Naive thymus-derived CD4-positive, alpha-beta T cell (primary cell): ENCODE measurements at regions of chr7 and their contacts with region 1.

Region 1: DNA sequence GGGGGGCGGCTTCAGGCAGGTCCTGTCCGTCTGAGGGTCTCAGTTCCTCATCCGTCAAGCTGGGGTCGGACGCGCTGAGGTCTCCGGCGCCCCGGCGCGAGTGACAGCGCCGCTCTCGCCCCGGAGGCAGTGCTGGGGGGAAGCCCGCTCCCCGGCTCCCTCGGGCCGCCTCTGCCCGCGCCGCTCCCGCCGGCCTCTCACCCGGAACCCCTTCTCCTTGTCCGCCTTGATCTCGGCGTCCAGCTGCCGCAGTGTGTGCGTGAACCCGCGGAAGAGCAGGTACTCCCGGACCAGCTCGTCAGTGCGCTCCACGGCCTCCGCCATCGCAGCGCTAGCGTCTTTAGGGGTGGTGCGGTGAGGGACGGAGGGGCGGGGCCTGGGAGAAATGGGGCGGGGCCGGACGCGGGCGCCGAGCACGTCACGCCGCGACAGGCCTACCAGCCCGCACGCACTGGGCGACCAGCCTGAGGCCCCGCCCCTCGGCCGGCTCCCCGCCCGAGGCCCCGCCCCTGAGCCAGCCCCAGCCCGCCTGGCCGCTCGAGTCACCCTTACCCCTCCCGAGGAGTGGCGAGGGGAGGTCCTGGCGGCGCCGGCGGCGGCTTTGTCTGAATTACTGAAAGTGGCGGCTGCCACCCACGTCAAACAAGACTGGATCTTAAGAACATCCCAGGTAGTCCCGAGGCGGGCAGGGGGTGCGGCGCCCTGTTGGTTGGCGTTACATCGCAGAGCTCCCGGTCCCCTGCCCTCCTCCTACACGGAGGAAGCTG is at the start of gene WDR91:
- DNase-seq: peak; percentile 83 to 94 (median 90)
- ATAC-seq: peak; percentile 97
- H3K4me3 ChIP-seq: peak within 1 kb of the TSS; percentile 68
- H3K4me3 Mint-ChIP-seq: peak within 1 kb of the TSS; percentile 91 to 99 (median 96)
- H3K27ac ChIP-seq: peak within 1 kb of the TSS; percentile 92
- H3K27ac Mint-ChIP-seq: peak within 1 kb of the TSS; percentile 94 to 99 (median 98)
- H3K4me1 ChIP-seq: peaks cover 0 to 5% of the 10 kb centered on the region in 2 donors
- H3K4me1 Mint-ChIP-seq: peaks cover 18 to 47% (median 37%) of the 10 kb centered on the region in 7 donors
- H3K27me3 ChIP-seq: no peaks in the 10 kb centered on the region
- H3K27me3 Mint-ChIP-seq: peaks cover 0 to 2% (median 0%) of the 10 kb centered on the region in 5 donors
- total RNA-seq, gene WDR91: 18.2 to 59.2 (median 37.0) TPM

Region 2: GRCh38 chr7:134126966-134127848 is 1084.2 kb before region 1 on chr7 and contains the start of gene LRGUK:
- CTCF ChIA-PET with region 1: no interaction called
- POLR2A ChIA-PET with region 1: no interaction called
- intact Hi-C with region 1: loop called in 1 of 2 experiments (anchors 1 kb)
- DNase-seq: peak; percentile 55 to 82 (median 77)
- ATAC-seq: peak; percentile 100
- H3K4me3 ChIP-seq: peak within 1 kb of the TSS; percentile 93
- H3K4me3 Mint-ChIP-seq: peak within 1 kb of the TSS; percentile 80 to 96 (median 88)
- H3K27ac ChIP-seq: no peak within 1 kb of the TSS
- H3K27ac Mint-ChIP-seq: peak within 1 kb of the TSS in 3 of 9 donors; percentile 16 to 65 (median 46)
- H3K4me1 ChIP-seq: peaks cover 3 to 9% of the 10 kb centered on the region in 2 donors
- H3K4me1 Mint-ChIP-seq: peaks cover 15 to 26% (median 18%) of the 10 kb centered on the region in 7 donors
- H3K27me3 ChIP-seq: no peaks in the 10 kb centered on the region
- H3K27me3 Mint-ChIP-seq: peaks cover 20 to 44% (median 23%) of the 10 kb centered on the region in 5 donors
- total RNA-seq, gene LRGUK: 0.22 to 1.0 (median 0.43) TPM

Region 3: GRCh38 chr7:134865001-134865845 is 346.1 kb before region 1 on chr7:
- CTCF ChIA-PET with region 1: no interaction called
- POLR2A ChIA-PET with region 1: no interaction called
- intact Hi-C with region 1: loop called in 1 of 2 experiments (anchors 1 kb)
- DNase-seq: peak in 8 of 9 donors; percentile 43 to 79 (median 76)
- ATAC-seq: peak; percentile 91
- H3K4me3 ChIP-seq: peak overlapping the region; percentile 51
- H3K4me3 Mint-ChIP-seq: peak overlapping the region; percentile 64 to 90 (median 84)
- H3K27ac ChIP-seq: peak overlapping the region; percentile 68
- H3K27ac Mint-ChIP-seq: peak overlapping the region; percentile 88 to 96 (median 92)
- H3K4me1 ChIP-seq: peaks cover 0 to 13% of the 10 kb centered on the region in 2 donors
- H3K4me1 Mint-ChIP-seq: peaks cover 8 to 76% (median 58%) of the 10 kb centered on the region in 7 donors
- H3K27me3 ChIP-seq: no peaks in the 10 kb centered on the region
- H3K27me3 Mint-ChIP-seq: no peaks in the 10 kb centered on the region

Region 4: GRCh38 chr7:135147899-135148721 is 63.3 kb before region 1 on chr7 and contains the start of gene TMEM140:
- CTCF ChIA-PET with region 1: interaction called, 5 read pairs
- POLR2A ChIA-PET with region 1: interaction called, 19 read pairs
- intact Hi-C with region 1: loop called (anchors 1 kb)
- DNase-seq: peak in 8 of 9 donors; percentile 56 to 88 (median 80)
- ATAC-seq: peak; percentile 84
- H3K4me3 ChIP-seq: peak within 1 kb of the TSS; percentile 71
- H3K4me3 Mint-ChIP-seq: peak within 1 kb of the TSS; percentile 83 to 95 (median 92)
- H3K27ac ChIP-seq: peak within 1 kb of the TSS; percentile 90
- H3K27ac Mint-ChIP-seq: peak within 1 kb of the TSS; percentile 93 to 99 (median 97)
- H3K4me1 ChIP-seq: peaks cover 31 to 38% of the 10 kb centered on the region in 2 donors
- H3K4me1 Mint-ChIP-seq: peaks cover 41 to 74% (median 70%) of the 10 kb centered on the region in 7 donors
- H3K27me3 ChIP-seq: no peaks in the 10 kb centered on the region
- H3K27me3 Mint-ChIP-seq: no peaks in the 10 kb centered on the region
- total RNA-seq, gene TMEM140: 17.8 to 44.7 (median 20.4) TPM

Region 5: DNA sequence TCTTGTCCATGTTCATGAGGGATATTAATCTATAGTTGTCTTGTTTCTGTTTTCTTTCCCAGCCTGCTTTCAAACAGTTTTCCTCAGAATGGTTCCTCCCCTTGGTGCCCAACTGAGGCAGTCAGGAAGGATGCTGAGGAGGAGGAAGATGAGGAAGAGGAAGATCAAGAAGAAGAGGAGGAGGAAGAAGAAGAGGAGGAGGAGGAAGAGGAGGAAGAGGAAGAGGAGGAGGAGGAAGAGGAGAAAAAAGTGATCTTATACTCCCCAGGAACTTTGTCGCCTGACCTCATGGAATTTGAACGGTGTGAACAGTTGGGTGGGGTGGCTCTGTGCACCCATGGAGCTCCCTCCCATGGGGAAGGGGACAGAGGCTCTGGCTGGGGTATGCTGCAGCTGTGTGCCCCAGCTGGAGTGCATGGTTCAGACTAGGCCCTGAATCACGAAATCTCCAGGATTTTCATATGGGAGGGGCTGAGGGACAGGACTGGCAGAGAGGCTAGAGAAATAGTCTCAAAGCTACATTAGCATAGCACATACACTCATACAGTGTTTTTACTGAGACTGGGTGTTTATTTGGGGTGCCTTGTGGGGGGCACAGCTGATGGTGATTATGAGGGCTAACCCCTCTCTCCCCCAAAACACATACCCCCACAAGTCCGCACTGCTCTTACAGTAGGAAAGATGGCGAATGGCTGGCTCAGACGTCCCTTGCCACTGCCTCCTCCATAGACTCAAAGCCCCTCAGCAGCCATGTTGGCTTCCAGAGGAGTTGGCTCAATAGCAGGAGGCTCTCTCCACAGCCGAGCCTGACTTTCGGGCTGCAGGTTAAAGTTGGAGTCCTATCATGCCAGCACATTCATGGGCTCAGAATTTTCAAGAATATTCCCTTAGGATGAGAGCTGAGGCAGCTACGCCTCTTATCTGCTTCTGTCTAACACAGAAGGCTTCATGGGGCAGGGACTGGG is 34.1 kb after region 1 on chr7:
- CTCF ChIA-PET with region 1: no interaction called
- POLR2A ChIA-PET with region 1: no interaction called
- intact Hi-C with region 1: no loop called
- DNase-seq: no peak
- ATAC-seq: no peak
- H3K4me3 ChIP-seq: no peak overlapping the region
- H3K4me3 Mint-ChIP-seq: no peak overlapping the region
- H3K27ac ChIP-seq: no peak overlapping the region
- H3K27ac Mint-ChIP-seq: no peak overlapping the region
- H3K4me1 ChIP-seq: no peaks in the 10 kb centered on the region
- H3K4me1 Mint-ChIP-seq: peaks cover 0 to 6% (median 0%) of the 10 kb centered on the region in 7 donors
- H3K27me3 ChIP-seq: no peaks in the 10 kb centered on the region
- H3K27me3 Mint-ChIP-seq: peaks cover 0 to 14% (median 3%) of the 10 kb centered on the region in 5 donors

Region 6: DNA sequence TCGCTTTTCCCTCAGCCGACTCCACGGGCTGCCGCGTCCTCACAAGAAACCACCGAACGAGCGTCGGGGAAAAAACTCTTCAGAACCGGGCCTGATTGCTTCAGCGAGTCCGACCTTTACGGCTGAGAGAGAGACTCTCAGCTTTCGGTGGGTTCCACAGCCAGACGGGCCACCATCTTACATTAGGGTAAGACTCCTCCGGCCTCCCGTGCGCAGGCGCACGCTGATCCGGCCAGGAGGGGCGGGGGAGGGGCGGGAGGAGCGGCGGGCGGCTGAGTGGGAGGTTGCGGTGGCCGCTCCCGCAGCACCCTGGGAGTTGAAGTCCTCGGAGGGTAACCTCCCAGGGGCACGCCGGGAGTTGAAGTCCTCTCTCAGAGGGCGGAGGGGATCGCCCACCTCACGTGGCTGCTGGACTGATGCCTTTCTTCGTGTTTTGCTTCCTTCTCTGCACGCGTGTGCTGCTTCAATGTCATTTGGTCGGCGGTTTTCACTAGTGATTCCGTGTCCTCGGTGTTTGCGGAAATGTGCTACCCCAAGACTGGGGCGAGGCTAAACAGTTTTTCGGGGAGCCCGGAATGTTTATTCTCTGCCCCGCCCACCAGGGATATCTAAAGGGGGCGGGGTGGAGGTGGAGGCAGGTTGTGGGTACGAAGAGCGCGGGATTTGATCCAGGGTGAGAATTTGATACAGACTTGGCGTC is 298.7 kb after region 1 on chr7 and contains the start of gene CNOT4:
- CTCF ChIA-PET with region 1: no interaction called
- POLR2A ChIA-PET with region 1: no interaction called
- intact Hi-C with region 1: loop called (anchors 1 kb)
- DNase-seq: peak; percentile 82 to 97 (median 92)
- ATAC-seq: peak; percentile 96
- H3K4me3 ChIP-seq: peak within 1 kb of the TSS; percentile 78
- H3K4me3 Mint-ChIP-seq: no peak within 1 kb of the TSS
- H3K27ac ChIP-seq: peak within 1 kb of the TSS; percentile 97
- H3K27ac Mint-ChIP-seq: no peak within 1 kb of the TSS
- H3K4me1 ChIP-seq: peaks cover 12 to 15% of the 10 kb centered on the region in 2 donors
- H3K4me1 Mint-ChIP-seq: peaks cover 3 to 21% (median 14%) of the 10 kb centered on the region in 7 donors
- H3K27me3 ChIP-seq: no peaks in the 10 kb centered on the region
- H3K27me3 Mint-ChIP-seq: no peaks in the 10 kb centered on the region
- total RNA-seq, gene CNOT4: 28.7 to 39.4 (median 38.3) TPM